ENCODE measurements at regions of chr12 and their contacts with region 1.

Region 1: DNA sequence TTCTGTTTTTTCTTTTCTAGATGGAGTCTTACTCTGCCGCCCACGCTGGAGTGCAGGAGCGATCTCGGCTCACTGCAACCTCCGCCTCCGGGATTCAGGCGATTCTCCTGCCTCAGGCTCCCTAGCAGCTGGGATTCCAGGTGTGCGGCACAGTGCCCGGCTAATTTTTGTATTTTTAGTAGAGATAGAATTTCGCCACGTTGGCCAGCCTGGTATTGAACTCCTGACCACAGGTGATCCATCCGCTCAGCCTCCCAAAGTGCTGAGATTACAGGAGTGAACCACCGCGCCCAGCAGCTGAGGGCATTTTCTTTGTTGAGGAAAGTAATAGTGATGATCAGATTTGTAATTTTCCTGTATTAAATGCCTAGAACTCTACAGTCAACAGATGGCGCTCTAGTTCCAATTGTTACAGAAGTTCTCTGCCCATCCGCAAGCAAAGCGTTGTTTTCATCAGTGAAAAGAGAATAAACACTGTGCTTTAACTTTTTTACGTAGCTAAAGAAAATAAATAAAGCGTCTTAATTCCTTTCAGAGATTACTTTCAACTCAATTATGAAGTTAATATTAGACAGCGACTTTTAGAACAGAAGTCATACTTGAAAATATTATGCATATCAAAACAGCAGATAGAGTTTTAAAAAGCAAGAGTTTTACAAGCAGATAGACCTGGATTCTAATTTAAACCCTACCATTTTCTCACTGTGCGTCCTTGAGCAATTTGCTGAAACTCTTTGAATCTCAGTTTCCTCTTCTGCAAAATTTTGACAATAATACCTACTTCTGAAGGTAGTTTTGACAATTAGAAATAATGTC is 335.1 kb downstream of the DUSP6 start:
- DNase-seq: peak; percentile 43

Region 2: DNA sequence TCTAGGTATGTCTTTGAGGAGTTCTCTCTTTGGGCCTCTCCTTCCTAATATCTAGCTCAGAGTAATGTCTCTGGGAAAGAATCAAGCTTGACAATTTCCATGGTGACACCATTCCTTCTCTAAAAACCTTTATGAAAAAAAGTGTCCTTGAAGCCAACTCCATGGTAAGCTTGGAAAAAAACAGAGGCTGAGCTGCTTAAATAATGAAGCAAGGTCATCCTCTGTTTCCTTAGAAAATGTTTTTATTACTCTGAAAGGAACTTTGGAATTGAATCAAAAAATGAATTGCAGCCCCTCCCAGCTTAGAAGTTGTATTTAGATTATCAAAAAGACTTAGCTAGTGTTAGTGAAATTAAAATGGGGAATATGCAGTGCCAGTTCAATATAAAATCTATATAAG is 270.8 kb before region 1 on chr12:
- CTCF ChIA-PET with region 1: no interaction called
- POLR2A ChIA-PET with region 1: no interaction called
- DNase-seq: no peak

Region 3: GRCh38 chr12:89080793-89081465 is 63.8 kb after region 1 on chr12:
- CTCF ChIA-PET with region 1: no interaction called
- POLR2A ChIA-PET with region 1: no interaction called
- DNase-seq: no peak

Region 4: DNA sequence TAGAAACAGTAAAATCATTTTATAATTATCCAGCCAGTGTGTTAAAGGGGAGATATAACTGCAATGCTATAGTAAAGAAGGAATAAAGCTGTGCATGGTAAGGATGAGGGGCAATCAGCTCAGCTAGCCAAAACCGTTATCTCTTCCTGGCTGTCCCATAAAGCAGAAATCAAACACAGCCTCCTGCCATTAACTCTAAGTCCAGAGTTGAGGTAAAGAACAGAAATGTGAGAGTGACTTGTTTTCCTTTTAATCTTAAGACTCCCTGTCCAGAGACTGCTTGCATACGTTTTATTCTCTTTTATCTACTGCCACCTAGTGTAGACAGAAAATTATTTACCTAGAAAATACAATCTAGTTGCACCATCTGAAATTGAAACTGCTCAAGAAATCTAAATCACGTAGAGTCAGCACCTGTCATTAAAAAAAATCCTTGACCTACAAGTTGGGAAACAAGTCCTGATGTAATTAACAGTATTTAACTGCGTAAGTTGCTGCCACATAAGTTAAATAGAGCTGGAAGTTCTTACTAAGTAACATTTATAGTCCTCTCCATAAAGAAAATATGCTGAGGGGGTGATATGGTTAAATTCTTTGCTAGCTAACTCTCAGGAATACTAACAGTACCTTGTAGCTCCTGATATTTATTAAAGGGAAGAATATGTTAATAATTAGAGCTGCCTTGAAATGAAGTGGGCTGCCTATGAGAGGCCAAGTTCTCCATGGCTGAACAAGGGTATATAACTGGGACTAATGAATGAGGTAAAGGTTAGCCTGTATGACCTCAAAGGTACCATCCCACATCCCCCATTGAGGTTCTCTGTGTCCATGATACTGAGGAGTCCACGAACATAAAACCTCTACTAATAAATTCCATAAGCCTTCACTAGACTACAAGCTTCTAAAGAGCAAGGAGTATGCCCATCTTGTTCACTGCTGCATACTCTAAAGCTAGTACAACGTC is 444.8 kb after region 1 on chr12:
- CTCF ChIA-PET with region 1: interaction called, 12 read pairs
- POLR2A ChIA-PET with region 1: interaction called, 3 read pairs
- DNase-seq: peak; percentile 45